ENCODE measurements at regions of chr10 and their contacts with region 1.

Region 1: GRCh38 chr10:3563298-3563697 is 221.7 kb downstream of the KLF6 start:
- DNase-seq: peak; percentile 72
- ATAC-seq: peak; percentile 89
- H3K4me3 Mint-ChIP-seq: no peak overlapping the region
- H3K27ac Mint-ChIP-seq: peak overlapping the region; percentile 63
- H3K4me1 Mint-ChIP-seq: peaks cover 24% of the 10 kb centered on the region
- H3K27me3 Mint-ChIP-seq: peaks cover 2% of the 10 kb centered on the region

Region 2: DNA sequence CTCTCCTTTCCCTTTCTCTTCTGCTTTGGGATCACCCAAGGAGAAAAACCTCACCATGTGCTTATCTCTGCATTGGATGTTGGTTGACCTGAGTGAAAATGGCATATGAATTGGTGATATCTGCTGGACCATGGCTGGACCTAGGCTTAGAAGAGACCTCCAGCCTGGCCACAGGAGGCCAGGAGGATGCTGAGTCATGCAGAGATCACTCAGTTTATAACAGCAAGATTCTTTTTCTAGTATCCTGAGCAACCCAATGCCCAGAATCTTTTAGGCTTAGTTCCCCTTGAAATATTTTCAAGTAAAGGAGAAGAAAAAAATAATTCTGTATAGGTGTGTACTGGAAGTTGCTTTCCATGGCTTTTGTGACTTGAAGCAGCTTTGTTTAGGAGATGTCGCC is 14.6 kb before region 1 on chr10:
- CTCF ChIA-PET with region 1: no interaction called
- POLR2A ChIA-PET with region 1: no interaction called
- intact Hi-C with region 1: no loop called
- DNase-seq: no peak
- ATAC-seq: no peak
- H3K4me3 Mint-ChIP-seq: no peak overlapping the region
- H3K27ac Mint-ChIP-seq: no peak overlapping the region
- H3K4me1 Mint-ChIP-seq: no peaks in the 10 kb centered on the region
- H3K27me3 Mint-ChIP-seq: peaks cover 3% of the 10 kb centered on the region

Region 3: DNA sequence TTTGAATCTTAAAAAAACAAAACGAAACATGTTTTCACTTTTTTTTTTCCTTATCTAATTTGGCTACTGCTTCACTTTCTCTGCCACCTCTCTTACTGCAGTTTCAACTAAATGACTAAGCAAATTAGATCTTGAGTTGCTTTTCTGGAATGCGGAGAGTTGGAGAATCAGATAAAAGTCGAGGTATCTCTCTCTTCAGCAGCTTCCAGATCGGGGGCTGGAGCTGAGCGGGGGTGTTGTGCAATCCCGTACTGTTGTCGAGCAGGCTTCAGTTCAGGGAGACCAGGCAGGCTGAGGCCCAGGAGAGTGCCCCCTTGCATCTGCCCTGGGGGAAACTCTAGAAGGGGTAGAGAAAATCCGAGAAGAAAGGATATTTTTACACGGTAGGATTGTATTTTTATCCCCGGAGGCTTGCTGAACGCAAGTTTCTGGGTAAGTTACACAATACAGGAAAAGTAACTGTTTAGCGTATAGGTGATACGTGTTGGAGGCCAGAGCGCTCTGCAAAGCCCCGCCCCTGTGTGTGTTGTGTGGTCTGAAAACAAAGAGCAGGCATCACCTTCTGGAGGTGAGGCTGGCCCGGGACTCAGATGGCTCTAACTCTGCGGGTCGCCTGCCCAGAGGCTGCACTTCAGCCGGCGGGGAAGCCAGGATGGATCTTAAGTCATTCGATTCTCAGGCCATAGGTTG is 105.1 kb after region 1 on chr10:
- CTCF ChIA-PET with region 1: no interaction called
- POLR2A ChIA-PET with region 1: no interaction called
- intact Hi-C with region 1: loop called in 1 of 2 experiments (anchors 5 kb)
- DNase-seq: peak; percentile 79
- ATAC-seq: peak; percentile 90
- H3K4me3 Mint-ChIP-seq: peak overlapping the region; percentile 67
- H3K27ac Mint-ChIP-seq: peak overlapping the region; percentile 81
- H3K4me1 Mint-ChIP-seq: peaks cover 41% of the 10 kb centered on the region
- H3K27me3 Mint-ChIP-seq: no peaks in the 10 kb centered on the region